Left cardiac atrium (tissue), 4 donors: ENCODE measurements at regions of chr5 and their contacts with region 1.

Region 1: DNA sequence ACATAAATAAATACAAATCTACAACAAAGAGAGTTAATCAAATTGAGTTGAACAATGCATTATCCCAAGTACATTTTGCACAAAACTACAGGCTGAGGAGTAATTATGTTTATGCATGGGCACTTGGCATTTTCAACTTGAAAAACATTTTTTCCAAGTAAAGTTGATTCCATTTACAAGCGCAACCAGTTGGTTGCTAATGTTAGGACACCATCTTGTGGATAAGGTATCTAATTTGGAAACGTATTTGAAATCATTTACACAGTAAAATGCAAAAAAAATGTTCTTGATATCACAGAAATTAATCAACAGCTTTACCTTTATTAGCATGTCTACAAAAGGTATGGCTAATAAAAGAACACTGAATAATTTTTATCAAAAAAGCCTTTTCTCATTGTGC is 18.8 kb downstream of the FTMT start:
- DNase-seq: no peak
- ATAC-seq: no peak

Region 2: DNA sequence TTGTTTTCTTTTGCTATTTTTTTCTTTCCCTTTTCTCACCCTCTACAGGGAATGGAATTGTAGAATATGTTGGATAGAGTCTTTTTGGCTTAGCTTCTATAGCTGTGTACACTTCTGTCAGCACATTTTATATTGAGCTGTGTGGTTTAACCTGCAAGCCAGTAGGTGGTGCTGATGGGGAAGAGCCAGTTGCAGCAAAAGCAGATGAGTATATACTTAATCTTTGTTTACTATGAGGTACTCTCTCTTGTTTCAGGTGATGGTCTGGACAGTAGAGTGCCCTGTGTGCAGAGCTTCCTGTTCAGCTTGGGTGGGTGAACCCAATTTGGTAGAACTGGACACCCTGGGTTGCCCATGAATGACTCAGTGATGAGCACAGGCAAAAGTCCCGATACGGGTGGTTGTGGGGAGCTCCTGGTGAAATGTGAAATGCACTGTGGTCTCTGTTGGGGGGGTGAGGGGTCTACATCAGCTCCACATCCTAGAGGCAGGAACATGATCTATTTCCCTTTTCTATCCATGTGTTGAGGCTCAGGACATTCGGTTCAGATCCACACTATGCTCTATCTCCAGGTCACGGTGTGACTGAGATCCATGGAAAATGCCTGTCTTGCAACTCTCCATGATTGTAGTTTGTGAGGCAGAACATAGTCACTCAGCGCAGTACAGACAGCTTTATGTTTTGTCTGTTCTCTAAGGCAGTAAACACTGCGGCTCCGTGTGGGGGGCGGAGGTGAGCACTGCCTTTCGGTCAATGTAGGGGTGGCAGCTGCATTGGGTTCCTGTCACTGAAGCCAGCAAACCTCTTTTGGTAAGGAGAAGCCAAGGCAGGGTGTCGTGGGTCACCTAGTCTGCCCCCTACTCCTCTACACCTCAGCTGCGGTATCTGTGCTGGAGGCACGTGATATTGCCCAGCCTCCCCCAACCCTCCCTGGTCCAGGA is 1053.2 kb before region 1 on chr5:
- intact Hi-C with region 1: loop called in 1 of 2 experiments (anchors 5 kb)
- DNase-seq: no peak
- ATAC-seq: no peak

Region 3: DNA sequence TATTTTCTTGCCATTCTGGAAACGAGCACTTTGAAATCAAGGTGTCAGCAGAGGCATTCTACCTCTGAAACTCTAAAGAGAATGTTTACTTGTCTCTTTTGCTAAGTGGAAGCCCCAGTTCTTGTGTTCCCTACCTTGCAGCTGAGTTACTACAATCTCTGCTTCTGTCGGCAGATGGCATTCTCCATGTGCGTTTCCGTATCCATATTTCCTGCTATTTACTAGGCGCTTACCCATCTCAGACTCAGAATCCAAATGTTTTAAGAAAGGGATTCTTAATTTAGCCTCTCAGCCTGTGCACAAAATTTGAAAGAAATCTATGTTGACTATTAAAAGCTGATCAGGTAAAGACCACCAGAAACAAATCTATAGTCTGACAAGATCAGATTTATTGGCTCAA is 240.1 kb before region 1 on chr5:
- intact Hi-C with region 1: loop called in 1 of 2 experiments (anchors 2 kb)
- DNase-seq: no peak
- ATAC-seq: no peak